ENCODE measurements at regions of chr19 and their contacts with region 1.

Region 1: DNA sequence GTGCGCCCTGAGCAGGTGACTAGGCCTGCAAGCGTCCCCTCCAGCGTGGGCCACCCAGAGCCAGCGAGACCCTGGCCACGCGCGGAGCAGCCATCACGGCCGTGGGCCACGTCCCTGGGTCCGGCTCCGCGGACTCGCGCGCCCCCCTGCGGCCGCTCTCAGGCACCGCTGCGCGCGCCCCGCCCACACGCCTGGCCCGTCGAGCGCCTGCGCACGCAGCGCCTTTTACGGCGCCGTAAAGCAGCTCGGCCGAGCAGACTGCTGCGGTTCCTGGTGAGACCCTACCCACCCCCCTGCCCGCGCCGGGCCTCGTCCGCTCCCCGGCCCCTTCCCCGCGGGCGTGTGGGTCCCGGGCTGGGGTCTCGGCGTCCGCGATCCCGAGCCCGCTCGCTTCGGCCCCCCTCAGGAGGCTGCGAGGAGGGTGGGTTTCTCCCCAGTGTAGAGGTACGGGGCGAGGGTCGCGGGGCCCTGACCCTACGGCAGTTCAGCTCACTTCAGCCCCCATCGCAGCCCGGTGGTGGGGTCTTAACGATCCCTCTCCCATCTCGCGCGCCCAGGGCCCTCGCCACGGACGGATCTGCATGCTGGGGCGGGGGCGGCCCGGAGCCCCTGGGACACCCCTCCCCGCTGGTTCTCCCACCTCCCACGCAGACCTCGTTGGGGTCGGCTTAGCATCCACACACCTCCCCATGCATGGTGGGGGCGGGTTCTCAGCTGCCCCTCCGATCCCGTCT is at the start of gene TRAPPC5:
- DNase-seq: peak; percentile 41 to 93
- H3K4me3 ChIP-seq: peak within 1 kb of the TSS; percentile 53 to 98 (median 80)
- H3K27ac ChIP-seq: peak within 1 kb of the TSS; percentile 34; the same call in 1 of the 2 replicates
- H3K4me1 ChIP-seq: peaks cover 0 to 6% (median 4%) of the 10 kb centered on the region in 4 experiments; a peak in 5 of 7 replicates
- H3K27me3 ChIP-seq: peaks cover 0 to 8% (median 3%) of the 10 kb centered on the region in 4 experiments; a peak in 2 of 7 replicates
- CTCF ChIP-seq: peak; percentile 89 to 93 (median 91)
- EP300 ChIP-seq: peak in 1 of 2 experiments; percentile 27; a peak in 1 of 3 replicates
- POLR2A ChIP-seq: no peak; a peak in 1 of 3 replicates
- RAD21 ChIP-seq: peak; percentile 70 to 88
- total RNA-seq, gene TRAPPC5: 99.7 and 109 TPM in 2 replicates

Region 2: GRCh38 chr19:7529246-7529600 is 151.6 kb before region 1 on chr19:
- CTCF ChIA-PET with region 1: no interaction called
- POLR2A ChIA-PET with region 1: no interaction called
- DNase-seq: no peak
- H3K4me3 ChIP-seq: no peak overlapping the region
- H3K27ac ChIP-seq: no peak overlapping the region
- H3K4me1 ChIP-seq: peaks cover 0 to 6% (median 2%) of the 10 kb centered on the region in 4 experiments; a peak in 3 of 7 replicates
- H3K27me3 ChIP-seq: no peaks in the 10 kb centered on the region
- CTCF ChIP-seq: no peak
- EP300 ChIP-seq: no peak
- POLR2A ChIP-seq: no peak
- RAD21 ChIP-seq: no peak

Region 3: DNA sequence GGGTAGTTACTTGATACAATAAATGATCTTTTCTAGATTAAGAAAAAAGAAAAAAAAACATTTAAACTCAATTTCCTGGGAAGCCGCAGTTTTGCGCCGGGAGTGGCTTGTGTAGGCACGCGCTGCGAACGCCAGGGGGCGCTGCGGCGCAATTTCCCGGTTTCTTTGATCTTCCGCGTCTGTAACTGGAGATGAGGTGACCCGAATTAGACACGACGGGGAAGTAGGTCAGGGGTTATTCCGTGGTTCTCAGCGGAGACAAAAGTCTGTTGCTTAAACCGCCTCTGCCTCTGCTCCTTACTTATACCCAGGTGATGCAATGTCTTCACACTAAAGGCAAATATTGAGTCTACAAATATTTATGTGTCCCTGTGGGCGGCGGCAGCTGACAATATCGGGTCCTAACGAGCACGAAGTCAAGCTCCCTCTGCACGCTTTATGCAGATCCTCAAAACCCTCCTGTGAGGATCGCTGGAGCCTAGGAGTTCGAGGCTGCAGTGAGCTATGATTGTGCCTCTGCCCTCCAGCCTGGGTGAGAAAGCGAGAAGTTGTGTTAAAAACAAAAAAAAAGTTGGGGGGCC is 28.6 kb before region 1 on chr19:
- CTCF ChIA-PET with region 1: interaction called, 13 read pairs
- POLR2A ChIA-PET with region 1: interaction called, 3 read pairs
- DNase-seq: peak; percentile 49 to 99
- H3K4me3 ChIP-seq: peak overlapping the region in 2 of 4 experiments; percentile 0 to 45; a peak in 2 of 8 replicates
- H3K27ac ChIP-seq: no peak overlapping the region
- H3K4me1 ChIP-seq: peaks cover 0 to 2% (median 0%) of the 10 kb centered on the region in 4 experiments; a peak in 4 of 7 replicates
- H3K27me3 ChIP-seq: peaks cover 2 to 18% (median 6%) of the 10 kb centered on the region in 4 experiments
- CTCF ChIP-seq: peak; percentile 72 to 87 (median 79)
- EP300 ChIP-seq: no peak
- POLR2A ChIP-seq: no peak
- RAD21 ChIP-seq: peak; percentile 58 to 59

Region 4: GRCh38 chr19:7665076-7665475 is 15.7 kb before region 1 on chr19:
- CTCF ChIA-PET with region 1: interaction called, 32 read pairs
- POLR2A ChIA-PET with region 1: interaction called, 6 read pairs
- DNase-seq: no peak
- H3K4me3 ChIP-seq: no peak overlapping the region
- H3K27ac ChIP-seq: no peak overlapping the region
- H3K4me1 ChIP-seq: peaks cover 0 to 3% (median 1%) of the 10 kb centered on the region in 4 experiments; a peak in 1 of 7 replicates
- H3K27me3 ChIP-seq: peaks cover 0 to 12% (median 8%) of the 10 kb centered on the region in 4 experiments; a peak in 4 of 7 replicates
- CTCF ChIP-seq: no peak
- EP300 ChIP-seq: no peak
- POLR2A ChIP-seq: no peak
- RAD21 ChIP-seq: no peak

Region 5: DNA sequence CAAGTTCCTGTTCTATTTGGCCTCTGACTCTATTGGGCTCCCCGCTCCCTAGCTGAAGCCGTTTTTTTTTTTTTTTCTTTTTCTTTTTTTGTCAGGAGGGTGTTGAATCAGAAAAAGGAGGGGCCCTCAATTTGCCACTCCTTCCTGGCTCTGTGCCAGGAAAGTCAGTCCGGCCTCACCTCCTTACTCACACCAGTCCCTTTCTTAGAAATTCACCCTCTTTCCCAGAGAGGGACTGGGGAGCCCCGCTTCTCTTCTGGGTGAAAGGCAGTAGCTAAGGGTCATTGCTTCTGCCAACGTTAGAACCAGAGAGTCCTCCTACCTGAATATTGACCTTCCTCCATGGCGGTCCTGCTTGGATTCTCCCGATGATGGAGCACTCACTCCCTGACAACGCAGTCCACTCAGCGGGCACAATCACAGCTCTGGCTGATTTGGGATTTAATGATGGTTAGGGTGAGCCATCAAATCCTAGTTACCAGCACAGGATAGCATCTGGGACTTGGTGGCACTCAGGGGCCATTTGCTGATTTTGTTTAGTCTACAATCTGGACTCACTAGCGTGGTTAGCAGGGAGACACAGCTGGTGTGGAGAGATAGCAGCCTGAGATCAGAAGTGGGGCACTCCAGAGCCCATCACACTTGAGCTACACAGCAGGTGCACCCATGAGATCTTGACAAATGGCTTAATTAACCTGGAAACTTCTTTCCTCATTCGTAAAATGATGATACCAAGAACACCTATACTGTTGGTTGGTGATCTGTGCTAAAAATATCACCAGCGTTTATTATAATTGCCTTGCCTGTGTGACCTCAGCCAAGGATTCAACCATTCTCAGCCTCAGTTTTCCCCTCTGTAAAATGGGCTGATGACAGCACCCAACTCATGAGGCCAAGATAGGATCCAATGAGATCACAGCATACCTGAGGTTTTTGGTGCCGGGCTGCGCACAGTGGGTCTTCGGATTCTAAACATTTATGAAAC is 18.9 kb after region 1 on chr19:
- CTCF ChIA-PET with region 1: interaction called, 21 read pairs
- POLR2A ChIA-PET with region 1: interaction called, 4 read pairs
- DNase-seq: no peak
- H3K4me3 ChIP-seq: no peak overlapping the region
- H3K27ac ChIP-seq: no peak overlapping the region
- H3K4me1 ChIP-seq: peaks cover 0 to 16% (median 8%) of the 10 kb centered on the region in 4 experiments; a peak in 5 of 7 replicates
- H3K27me3 ChIP-seq: no peaks in the 10 kb centered on the region
- CTCF ChIP-seq: no peak
- EP300 ChIP-seq: no peak
- POLR2A ChIP-seq: no peak
- RAD21 ChIP-seq: no peak

Region 6: DNA sequence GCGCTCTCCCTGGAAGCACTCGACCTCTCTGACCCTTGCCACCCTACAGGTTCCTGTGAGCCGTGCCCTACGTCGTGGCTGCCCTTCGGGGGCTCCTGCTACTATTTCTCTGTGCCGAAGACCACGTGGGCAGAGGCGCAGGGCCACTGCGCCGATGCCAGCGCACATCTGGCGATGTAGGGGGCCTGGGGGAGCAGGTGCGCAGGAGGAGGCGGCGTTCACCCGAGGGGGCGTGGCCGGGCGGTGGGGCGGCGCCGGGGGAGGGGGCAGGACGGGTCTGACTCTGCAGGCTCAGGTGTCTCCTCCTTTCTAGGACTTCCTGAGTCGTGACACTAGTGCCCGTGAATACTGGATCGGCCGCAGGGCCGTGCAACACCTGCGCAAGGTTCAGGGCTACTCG is 108.7 kb after region 1 on chr19:
- CTCF ChIA-PET with region 1: interaction called, 12 read pairs
- POLR2A ChIA-PET with region 1: no interaction called
- DNase-seq: peak in 1 of 2 experiments; percentile 89
- H3K4me3 ChIP-seq: peak overlapping the region; percentile 23 to 62 (median 47)
- H3K27ac ChIP-seq: no peak overlapping the region
- H3K4me1 ChIP-seq: peaks cover 0 to 19% (median 12%) of the 10 kb centered on the region in 4 experiments; a peak in 6 of 7 replicates
- H3K27me3 ChIP-seq: peaks cover 13 to 35% (median 29%) of the 10 kb centered on the region in 4 experiments
- CTCF ChIP-seq: no peak
- EP300 ChIP-seq: no peak
- POLR2A ChIP-seq: no peak
- RAD21 ChIP-seq: no peak

Region 7: DNA sequence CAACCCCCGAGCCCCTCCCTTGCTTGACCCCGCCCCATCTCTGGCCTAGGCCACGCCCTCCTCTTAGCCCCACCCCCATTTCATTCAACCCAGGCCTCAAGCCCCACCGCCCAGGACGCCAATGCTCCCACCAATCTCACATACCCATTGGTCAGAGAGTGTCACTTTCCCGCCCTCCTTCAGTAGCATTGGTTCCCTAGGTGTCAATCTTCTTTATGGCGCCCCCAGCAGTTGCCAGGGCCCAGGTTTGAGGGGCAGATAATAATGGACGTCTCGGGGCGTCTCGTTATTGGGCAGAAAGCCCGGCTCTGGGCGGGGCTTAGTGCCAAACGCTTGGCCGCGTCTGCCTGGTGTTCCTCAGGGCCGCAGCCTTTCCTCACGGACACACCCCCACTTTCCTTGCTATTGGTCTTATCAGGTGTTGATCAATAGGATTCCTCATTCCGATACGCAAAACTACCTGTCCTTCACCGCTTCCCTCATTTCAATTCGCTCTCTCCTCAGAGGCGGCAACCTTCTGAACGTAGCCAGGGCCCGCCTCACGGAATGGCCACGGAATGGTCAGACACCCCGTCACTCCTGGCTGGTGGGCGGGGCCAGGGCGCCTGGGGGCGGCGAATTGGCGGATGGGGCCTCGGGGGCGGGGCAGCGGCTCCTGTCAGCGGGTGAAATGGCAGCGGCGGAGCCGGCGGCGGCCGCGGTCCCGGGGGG is 148.9 kb after region 1 on chr19 and contains the start of gene EVI5L:
- CTCF ChIA-PET with region 1: interaction called, 11 read pairs
- POLR2A ChIA-PET with region 1: interaction called, 3 read pairs
- DNase-seq: peak; percentile 99 to 100
- H3K4me3 ChIP-seq: peak within 1 kb of the TSS; percentile 50 to 69 (median 61)
- H3K27ac ChIP-seq: no peak within 1 kb of the TSS
- H3K4me1 ChIP-seq: peaks cover 0 to 8% (median 6%) of the 10 kb centered on the region in 4 experiments; a peak in 5 of 7 replicates
- H3K27me3 ChIP-seq: peaks cover 0 to 3% (median 2%) of the 10 kb centered on the region in 4 experiments; a peak in 1 of 7 replicates
- CTCF ChIP-seq: no peak
- EP300 ChIP-seq: no peak
- POLR2A ChIP-seq: no peak
- RAD21 ChIP-seq: no peak
- total RNA-seq, gene EVI5L: 10.4 and 11.0 TPM in 2 replicates